ENCODE measurements at regions of chr16 and their contacts with region 1.

Region 1: GRCh38 chr16:77660311-77660710 is 62.0 kb upstream of the NUDT7 start:
- ATAC-seq: peak in 7 of 8 experiments; percentile 33 to 87 (median 50)
- H3K4me3 ChIP-seq: no peak overlapping the region
- H3K27ac ChIP-seq: no peak overlapping the region
- H3K4me1 ChIP-seq: peaks cover 0 to 2% of the 10 kb centered on the region in 2 donors

Region 2: GRCh38 chr16:77696149-77696548 is 35.8 kb after region 1 on chr16:
- in situ Hi-C with region 1: no loop called
- ATAC-seq: peak in 5 of 8 experiments; percentile 90 to 99 (median 97)
- H3K4me3 ChIP-seq: no peak overlapping the region
- H3K27ac ChIP-seq: no peak overlapping the region
- H3K4me1 ChIP-seq: peaks cover 12 to 15% of the 10 kb centered on the region in 2 donors

Region 3: GRCh38 chr16:77971306-77972271 is 311.3 kb after region 1 on chr16:
- in situ Hi-C with region 1: loop called in 2 of 9 experiments (anchors 25 kb)
- ATAC-seq: peak; percentile 75 to 97 (median 86)
- H3K4me3 ChIP-seq: no peak overlapping the region
- H3K27ac ChIP-seq: no peak overlapping the region
- H3K4me1 ChIP-seq: peaks cover 4 to 6% of the 10 kb centered on the region in 2 donors

Region 4: DNA sequence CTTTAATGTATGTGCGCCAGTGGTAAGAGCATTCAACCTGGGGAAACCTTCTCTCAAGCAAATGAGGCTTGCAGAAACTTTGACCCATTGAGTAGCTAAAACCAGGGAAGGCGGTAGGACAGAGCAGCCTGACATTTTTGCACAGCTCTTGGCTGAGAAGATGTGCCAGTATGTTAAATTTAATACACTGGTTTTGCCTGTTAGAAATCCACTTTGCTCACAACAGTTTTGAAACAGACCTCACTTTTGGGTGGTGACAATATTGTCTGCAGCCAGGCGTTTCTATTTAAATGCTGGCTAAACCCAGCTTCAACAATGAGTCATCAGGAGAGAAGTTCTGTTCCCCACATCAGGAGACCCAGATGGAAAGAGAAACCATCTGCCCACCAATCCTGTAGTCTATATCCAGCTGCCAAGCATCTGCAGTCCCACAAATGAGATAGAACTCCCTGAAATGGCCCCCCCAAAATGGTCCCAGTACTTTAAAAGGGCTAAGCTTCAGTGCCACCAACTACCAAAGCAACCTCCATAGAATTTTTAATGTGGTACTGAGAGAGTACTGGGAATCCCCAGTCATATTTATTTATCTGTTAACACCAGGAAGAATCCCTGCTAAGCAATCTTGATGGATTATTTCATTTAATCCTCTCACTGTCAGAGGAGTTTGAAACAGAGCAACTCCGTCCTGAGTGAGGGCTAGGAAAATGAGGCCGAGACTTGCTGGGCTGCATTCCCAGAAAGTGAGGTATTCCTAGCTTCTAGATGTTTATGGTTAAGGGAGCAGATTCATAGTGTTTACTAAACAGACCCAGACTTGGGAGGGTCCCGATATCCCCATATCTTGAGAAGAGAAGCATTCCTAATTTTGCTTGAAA is 333.0 kb after region 1 on chr16:
- in situ Hi-C with region 1: loop called in 1 of 9 experiments (anchors 25 kb)
- ATAC-seq: peak in 5 of 8 experiments; percentile 25 to 89 (median 49)
- H3K4me3 ChIP-seq: no peak overlapping the region
- H3K27ac ChIP-seq: no peak overlapping the region
- H3K4me1 ChIP-seq: peaks cover 2 to 7% of the 10 kb centered on the region in 2 donors

Region 5: DNA sequence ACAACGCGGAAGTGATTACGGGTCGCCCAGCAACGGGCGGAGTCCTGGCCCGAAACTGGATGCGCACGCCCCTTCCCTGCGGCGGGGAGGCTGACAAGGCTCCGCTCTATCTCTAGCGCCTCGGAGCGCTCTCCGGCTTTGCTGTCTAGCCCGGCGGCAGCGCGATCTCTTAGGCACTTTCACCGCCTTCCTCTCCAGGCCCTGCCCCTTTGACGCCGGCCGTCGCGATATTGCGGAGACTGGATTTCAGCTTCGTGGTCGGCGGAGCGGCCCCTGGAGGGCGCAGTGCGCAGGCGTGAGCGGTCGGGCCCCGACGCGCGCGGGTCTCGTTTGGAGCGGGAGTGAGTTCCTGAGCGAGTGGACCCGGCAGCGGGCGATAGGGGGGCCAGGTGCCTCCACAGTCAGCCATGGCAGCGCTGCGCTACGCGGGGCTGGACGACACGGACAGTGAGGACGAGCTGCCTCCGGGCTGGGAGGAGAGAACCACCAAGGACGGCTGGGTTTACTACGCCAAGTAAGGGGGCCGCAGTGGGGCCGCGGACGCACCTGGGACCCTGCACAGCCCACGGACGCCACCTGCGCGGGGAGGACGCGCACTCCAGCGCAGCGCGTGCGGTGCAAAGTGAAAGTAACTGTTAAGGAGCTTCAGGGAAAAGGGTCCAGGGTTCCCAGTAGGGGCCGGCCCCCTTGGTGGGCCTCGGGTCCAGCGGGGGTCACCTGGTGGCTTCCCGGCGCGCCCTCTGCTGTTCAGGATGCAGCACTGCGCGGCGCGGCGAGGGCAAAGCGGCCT is 439.3 kb after region 1 on chr16 and contains the start of gene WWOX:
- in situ Hi-C with region 1: loop called in 2 of 9 experiments (anchors 25 kb)
- ATAC-seq: peak; percentile 95 to 96 (median 96)
- H3K4me3 ChIP-seq: peak within 1 kb of the TSS; percentile 54 to 78 (median 67)
- H3K27ac ChIP-seq: peak within 1 kb of the TSS; percentile 10 to 18
- H3K4me1 ChIP-seq: no peaks in the 10 kb centered on the region
- total RNA-seq, gene WWOX: 10.3 to 27.8 (median 12.3) TPM

Measured in motor neuron (in vitro differentiated cells).